Naive thymus-derived CD4-positive, alpha-beta T cell (primary cell): ENCODE measurements at regions of chr1 and their contacts with region 1.

Region 1: DNA sequence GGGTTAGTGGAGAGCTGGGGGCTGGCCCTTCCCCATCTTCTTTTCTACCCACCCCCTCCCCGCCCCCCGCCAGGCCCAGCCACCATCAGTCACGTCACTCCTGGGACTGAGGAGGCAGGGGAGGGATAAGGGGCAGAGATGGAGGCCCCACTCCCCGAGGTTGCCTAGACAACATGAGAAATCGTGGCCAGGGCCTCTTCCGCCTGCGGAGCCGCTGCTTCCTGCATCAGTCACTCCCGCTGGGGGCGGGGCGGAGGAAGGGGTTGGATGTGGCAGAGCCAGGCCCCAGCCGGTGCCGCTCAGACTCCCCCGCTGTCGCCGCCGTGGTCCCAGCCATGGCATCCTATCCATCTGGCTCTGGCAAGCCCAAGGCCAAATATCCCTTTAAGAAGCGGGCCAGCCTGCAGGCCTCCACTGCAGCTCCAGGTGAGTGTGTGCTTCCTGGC is 1.2 kb downstream of the AMPD2 start:
- DNase-seq: peak; percentile 92 to 98 (median 95)
- ATAC-seq: peak; percentile 90
- H3K4me3 ChIP-seq: peak overlapping the region; percentile 78
- H3K4me3 Mint-ChIP-seq: peak overlapping the region; percentile 90 to 98 (median 94)
- H3K27ac ChIP-seq: peak overlapping the region; percentile 90
- H3K27ac Mint-ChIP-seq: peak overlapping the region; percentile 92 to 98 (median 96)
- H3K4me1 ChIP-seq: peaks cover 14 to 43% of the 10 kb centered on the region in 2 donors
- H3K4me1 Mint-ChIP-seq: peaks cover 52 to 79% (median 68%) of the 10 kb centered on the region in 7 donors
- H3K27me3 ChIP-seq: no peaks in the 10 kb centered on the region
- H3K27me3 Mint-ChIP-seq: no peaks in the 10 kb centered on the region

Region 2: GRCh38 chr1:109282952-109283747 is 337.7 kb before region 1 on chr1 and contains the start of gene PSRC1:
- CTCF ChIA-PET with region 1: no interaction called
- POLR2A ChIA-PET with region 1: no interaction called
- intact Hi-C with region 1: loop called in 1 of 2 experiments (anchors 2 kb)
- DNase-seq: peak; percentile 78 to 94 (median 88)
- ATAC-seq: peak; percentile 98
- H3K4me3 ChIP-seq: peak within 1 kb of the TSS; percentile 92
- H3K4me3 Mint-ChIP-seq: peak within 1 kb of the TSS; percentile 89 to 99 (median 96)
- H3K27ac ChIP-seq: peak within 1 kb of the TSS; percentile 65
- H3K27ac Mint-ChIP-seq: peak within 1 kb of the TSS; percentile 55 to 94 (median 88)
- H3K4me1 ChIP-seq: peaks cover 8 to 11% of the 10 kb centered on the region in 2 donors
- H3K4me1 Mint-ChIP-seq: peaks cover 6 to 29% (median 14%) of the 10 kb centered on the region in 7 donors
- H3K27me3 ChIP-seq: no peaks in the 10 kb centered on the region
- H3K27me3 Mint-ChIP-seq: peaks cover 0 to 8% (median 0%) of the 10 kb centered on the region in 5 donors
- total RNA-seq, gene PSRC1: 0.38 to 16.1 (median 1.3) TPM in 4 of 5 experiments, not detected in the other

Region 3: DNA sequence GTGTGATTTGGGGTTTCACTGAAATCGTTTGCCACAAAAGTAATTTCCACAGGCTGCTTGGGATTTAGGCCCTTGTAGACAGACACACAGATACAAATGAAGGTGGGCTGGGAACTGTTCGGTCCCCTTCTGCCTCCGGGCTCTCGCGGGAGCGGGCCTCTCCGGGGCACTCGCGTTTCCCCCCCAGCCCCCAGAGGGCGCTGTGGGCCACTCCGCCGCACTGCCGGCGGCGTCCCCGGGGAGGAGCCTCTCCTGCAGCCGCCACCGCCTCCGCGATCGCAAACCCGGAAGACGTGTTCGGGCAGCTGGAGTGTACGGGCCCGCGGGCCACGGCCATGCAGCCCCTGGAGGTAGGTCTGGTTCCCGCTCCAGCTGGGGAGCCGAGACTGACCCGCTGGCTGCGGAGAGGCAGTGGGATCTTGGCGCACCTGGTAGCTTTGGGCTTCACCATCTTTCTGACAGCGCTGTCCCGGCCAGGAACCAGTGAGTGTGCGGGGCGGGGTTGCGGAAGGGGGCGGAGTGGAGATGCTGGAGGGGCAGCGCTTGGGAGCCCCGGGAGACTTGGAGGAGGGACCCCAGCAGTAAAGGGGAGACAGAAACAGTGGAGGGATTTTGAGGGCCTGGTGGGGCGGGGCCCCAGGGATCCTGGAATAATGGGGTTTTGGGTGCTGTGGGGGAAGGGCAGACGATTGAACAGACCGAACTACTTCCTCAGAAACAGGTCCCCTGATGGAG is 126.9 kb before region 1 on chr1 and contains the start of gene CYB561D1:
- CTCF ChIA-PET with region 1: interaction called, 4 read pairs
- POLR2A ChIA-PET with region 1: no interaction called
- intact Hi-C with region 1: loop called in 1 of 2 experiments (anchors 2 kb)
- DNase-seq: peak; percentile 83 to 97 (median 91)
- ATAC-seq: peak; percentile 96
- H3K4me3 ChIP-seq: peak within 1 kb of the TSS; percentile 96
- H3K4me3 Mint-ChIP-seq: peak within 1 kb of the TSS; percentile 90 to 98 (median 94)
- H3K27ac ChIP-seq: peak within 1 kb of the TSS; percentile 72
- H3K27ac Mint-ChIP-seq: peak within 1 kb of the TSS; percentile 84 to 98 (median 92)
- H3K4me1 ChIP-seq: peaks cover 31 to 59% of the 10 kb centered on the region in 2 donors
- H3K4me1 Mint-ChIP-seq: peaks cover 40 to 59% (median 53%) of the 10 kb centered on the region in 7 donors
- H3K27me3 ChIP-seq: no peaks in the 10 kb centered on the region
- H3K27me3 Mint-ChIP-seq: no peaks in the 10 kb centered on the region
- total RNA-seq, gene CYB561D1: 19.6 to 41.5 (median 24.1) TPM

Region 4: GRCh38 chr1:109910123-109910962 is 289.5 kb after region 1 on chr1 and contains the start of gene CSF1:
- CTCF ChIA-PET with region 1: no interaction called
- POLR2A ChIA-PET with region 1: no interaction called
- intact Hi-C with region 1: loop called in 1 of 2 experiments (anchors 5 kb)
- DNase-seq: peak; percentile 15 to 72 (median 35)
- ATAC-seq: peak; percentile 71
- H3K4me3 ChIP-seq: peak within 1 kb of the TSS; percentile 65
- H3K4me3 Mint-ChIP-seq: peak within 1 kb of the TSS; percentile 78 to 98 (median 88)
- H3K27ac ChIP-seq: peak within 1 kb of the TSS; percentile 43
- H3K27ac Mint-ChIP-seq: peak within 1 kb of the TSS; percentile 38 to 97 (median 73)
- H3K4me1 ChIP-seq: peaks cover 36 to 43% of the 10 kb centered on the region in 2 donors
- H3K4me1 Mint-ChIP-seq: peaks cover 43 to 83% (median 64%) of the 10 kb centered on the region in 7 donors
- H3K27me3 ChIP-seq: no peaks in the 10 kb centered on the region
- H3K27me3 Mint-ChIP-seq: peaks cover 0 to 18% (median 0%) of the 10 kb centered on the region in 5 donors
- total RNA-seq, gene CSF1: 1.4 to 125 (median 5.9) TPM